Endothelial cell of umbilical vein (primary cell): ENCODE measurements at regions of chr3 and their contacts with region 1.

Region 1: DNA sequence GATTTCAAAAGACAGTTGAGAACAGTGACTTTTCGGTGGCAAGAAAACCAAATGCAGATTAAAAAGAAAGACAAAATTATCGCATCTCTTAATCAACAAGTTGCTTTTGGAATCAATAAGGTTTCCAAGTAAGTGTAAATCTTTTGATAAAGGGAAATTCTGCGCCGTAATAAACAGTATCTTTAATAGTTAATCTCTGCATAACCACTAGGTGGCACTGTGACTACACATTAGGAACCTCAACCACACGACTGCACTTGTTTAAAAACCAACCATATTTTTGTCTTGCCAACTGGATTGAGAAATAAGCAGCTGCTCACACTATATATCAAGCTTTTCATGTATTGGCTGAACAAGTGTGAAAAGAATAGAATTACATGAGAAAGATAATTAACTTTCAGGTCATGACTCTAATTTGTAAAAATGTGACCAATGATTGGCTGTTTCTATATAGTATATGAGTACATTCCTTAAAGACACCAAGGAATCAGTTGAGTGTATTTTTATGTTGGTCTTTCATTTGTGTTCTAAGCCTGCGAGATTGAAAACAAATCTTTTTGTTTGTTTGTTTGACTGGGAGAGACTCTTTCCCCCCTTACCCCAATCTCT is 72.7 kb downstream of the DZIP3 start:
- DNase-seq: peak; percentile 71
- H3K4me3 ChIP-seq: no peak overlapping the region
- H3K27ac ChIP-seq: no peak overlapping the region
- H3K4me1 ChIP-seq: no peaks in the 10 kb centered on the region
- H3K27me3 ChIP-seq: no peaks in the 10 kb centered on the region
- CTCF ChIP-seq: peak; percentile 39
- POLR2A ChIP-seq: no peak

Region 2: DNA sequence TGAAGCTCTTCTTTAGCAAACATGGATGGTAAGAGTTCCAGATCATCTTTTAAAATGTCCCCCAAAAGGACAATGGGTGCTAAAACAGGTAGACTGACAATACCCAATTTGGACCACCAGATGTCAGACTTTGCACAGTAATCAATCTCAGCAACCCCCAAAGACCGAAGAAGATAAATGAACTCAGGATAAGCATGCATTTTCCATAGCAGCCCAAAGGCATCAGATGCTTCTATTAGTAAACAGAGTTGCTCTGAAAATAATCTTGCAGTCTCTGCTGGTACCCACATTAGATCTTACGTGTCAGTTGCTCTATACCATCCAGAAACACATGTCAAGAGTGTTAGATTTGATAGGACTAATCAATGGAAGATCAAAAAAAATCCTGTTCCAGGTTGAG is 172.5 kb before region 1 on chr3:
- CTCF ChIA-PET with region 1: no interaction called
- POLR2A ChIA-PET with region 1: no interaction called
- dilution Hi-C with region 1: no loop called
- intact Hi-C with region 1: loop called (anchors 2 kb)
- DNase-seq: peak; percentile 75
- H3K4me3 ChIP-seq: no peak overlapping the region
- H3K27ac ChIP-seq: no peak overlapping the region
- H3K4me1 ChIP-seq: peaks cover 12% of the 10 kb centered on the region
- H3K27me3 ChIP-seq: no peaks in the 10 kb centered on the region
- CTCF ChIP-seq: peak; percentile 51 to 57
- POLR2A ChIP-seq: no peak

Region 3: GRCh38 chr3:108818404-108818803 is 156.2 kb after region 1 on chr3:
- CTCF ChIA-PET with region 1: interaction called, 9 read pairs
- POLR2A ChIA-PET with region 1: no interaction called
- dilution Hi-C with region 1: no loop called
- intact Hi-C with region 1: loop called (anchors 2 kb)
- DNase-seq: peak; percentile 10
- H3K4me3 ChIP-seq: no peak overlapping the region
- H3K27ac ChIP-seq: no peak overlapping the region
- H3K4me1 ChIP-seq: no peaks in the 10 kb centered on the region
- H3K27me3 ChIP-seq: no peaks in the 10 kb centered on the region
- CTCF ChIP-seq: peak in 1 of 2 donors; percentile 23
- POLR2A ChIP-seq: no peak

Region 4: DNA sequence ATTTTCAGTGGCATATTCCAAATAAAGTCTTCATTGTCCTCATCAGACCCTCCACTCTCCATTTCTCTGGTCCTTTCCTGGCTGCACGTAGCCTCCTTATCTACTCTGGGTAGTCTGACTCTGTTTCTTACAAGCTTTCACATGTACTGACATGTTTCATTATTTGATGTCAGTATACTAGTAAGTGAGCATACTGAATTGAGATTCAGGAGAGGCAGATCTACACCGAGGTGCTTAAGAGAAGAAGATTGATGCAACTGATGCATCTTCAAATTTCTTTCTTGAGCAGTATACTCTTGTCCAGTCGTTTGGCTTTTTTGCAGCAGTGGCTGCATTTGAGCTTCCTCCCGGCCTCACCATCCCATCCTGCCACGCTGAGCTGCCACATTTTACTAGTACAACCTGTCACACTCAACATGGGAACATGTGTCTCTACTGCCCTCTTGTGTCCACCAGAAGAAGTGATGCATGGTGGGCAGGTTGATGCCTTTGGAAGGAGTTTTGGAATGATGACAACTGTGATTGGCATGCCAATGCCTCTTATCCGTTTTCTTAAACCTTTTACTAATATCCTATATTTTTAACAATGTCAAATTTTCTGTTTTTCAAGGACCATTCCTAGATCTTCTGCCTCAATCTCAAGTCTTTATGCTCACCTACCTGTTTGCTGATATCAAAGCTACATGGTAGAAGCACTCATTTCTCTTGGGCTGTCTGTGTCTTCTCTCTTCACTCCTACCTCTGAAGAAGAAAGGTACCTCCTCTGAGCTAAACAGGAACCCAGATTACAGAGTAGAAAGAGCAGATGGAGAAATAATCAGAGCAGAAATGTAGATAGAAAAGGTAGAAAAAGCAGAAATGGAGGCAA is 252.8 kb after region 1 on chr3:
- CTCF ChIA-PET with region 1: interaction called, 151 read pairs
- POLR2A ChIA-PET with region 1: no interaction called
- dilution Hi-C with region 1: no loop called
- intact Hi-C with region 1: loop called (anchors 1 kb)
- DNase-seq: peak; percentile 69
- H3K4me3 ChIP-seq: no peak overlapping the region
- H3K27ac ChIP-seq: no peak overlapping the region
- H3K4me1 ChIP-seq: no peaks in the 10 kb centered on the region
- H3K27me3 ChIP-seq: no peaks in the 10 kb centered on the region
- CTCF ChIP-seq: peak; percentile 78 to 84
- POLR2A ChIP-seq: no peak

Region 5: GRCh38 chr3:109081746-109082510 is 419.7 kb after region 1 on chr3:
- CTCF ChIA-PET with region 1: interaction called, 6 read pairs
- POLR2A ChIA-PET with region 1: no interaction called
- dilution Hi-C with region 1: no loop called
- intact Hi-C with region 1: loop called (anchors 1 kb)
- DNase-seq: peak; percentile 46
- H3K4me3 ChIP-seq: no peak overlapping the region
- H3K27ac ChIP-seq: no peak overlapping the region
- H3K4me1 ChIP-seq: no peaks in the 10 kb centered on the region
- H3K27me3 ChIP-seq: no peaks in the 10 kb centered on the region
- CTCF ChIP-seq: peak; percentile 66 to 67
- POLR2A ChIP-seq: no peak